K562 (cell line): ENCODE measurements at regions of chr19 and their contacts with region 1.

Region 1: DNA sequence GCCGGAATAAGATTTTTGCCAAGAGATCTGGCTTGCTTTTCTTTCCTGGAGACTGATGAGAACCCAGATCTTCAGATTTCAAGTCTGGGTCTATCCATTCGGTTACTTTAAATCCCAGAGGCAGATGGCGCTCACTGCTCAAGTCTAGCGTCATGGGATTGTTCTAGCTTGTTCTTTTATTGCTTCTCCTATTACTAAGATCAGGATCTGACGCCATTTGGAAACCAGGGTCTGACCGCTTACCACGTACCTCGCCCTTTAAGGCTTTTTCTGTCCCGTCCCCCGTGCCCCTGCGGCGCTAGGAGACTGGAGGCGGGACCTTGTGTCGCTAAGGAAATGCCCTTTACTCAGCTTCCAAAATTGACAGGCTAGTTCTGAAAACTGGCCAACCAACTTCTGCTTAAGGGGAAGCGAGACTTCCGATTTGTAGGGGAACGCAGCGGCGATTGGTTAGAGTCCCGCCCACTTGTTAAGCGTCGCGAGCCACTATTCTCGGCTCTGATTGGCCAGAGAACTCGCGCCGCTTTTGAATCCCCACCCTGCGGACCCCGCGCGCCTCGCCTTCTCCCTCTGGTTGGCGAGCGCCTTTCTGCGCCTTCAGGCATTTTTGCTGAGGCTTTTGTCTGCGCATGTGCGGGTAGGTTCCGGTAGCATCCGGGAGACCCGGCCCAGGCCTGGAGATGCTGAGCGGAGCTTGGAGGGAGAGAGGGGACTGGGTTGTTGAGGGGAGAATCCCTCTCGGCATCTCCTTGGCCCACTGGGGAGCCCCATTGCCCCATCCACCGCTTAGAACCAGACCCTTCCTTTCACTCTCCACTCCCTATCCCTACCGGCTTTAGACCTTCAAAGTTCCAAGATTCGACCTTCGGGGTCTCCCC is 3.8 kb upstream of the C19orf84 start:
- DNase-seq: peak; percentile 93 to 99 (median 95)
- ATAC-seq: peak; percentile 92
- H3K4me3 ChIP-seq: peak overlapping the region; percentile 58
- H3K27ac ChIP-seq: peak overlapping the region; percentile 96
- H3K4me1 ChIP-seq: peaks cover 28 to 30% of the 10 kb centered on the region in 2 experiments; a peak in 4 of 5 replicates
- H3K27me3 ChIP-seq: no peaks in the 10 kb centered on the region
- CTCF ChIP-seq: peak in 2 of 3 experiments; percentile 23 to 36; a peak in 3 of 6 replicates
- EP300 ChIP-seq: peak; percentile 20; the same call in 1 of the 2 replicates
- POLR2A ChIP-seq: peak; percentile 79
- RAD21 ChIP-seq: no peak; a peak in 1 of 4 replicates

Region 2: DNA sequence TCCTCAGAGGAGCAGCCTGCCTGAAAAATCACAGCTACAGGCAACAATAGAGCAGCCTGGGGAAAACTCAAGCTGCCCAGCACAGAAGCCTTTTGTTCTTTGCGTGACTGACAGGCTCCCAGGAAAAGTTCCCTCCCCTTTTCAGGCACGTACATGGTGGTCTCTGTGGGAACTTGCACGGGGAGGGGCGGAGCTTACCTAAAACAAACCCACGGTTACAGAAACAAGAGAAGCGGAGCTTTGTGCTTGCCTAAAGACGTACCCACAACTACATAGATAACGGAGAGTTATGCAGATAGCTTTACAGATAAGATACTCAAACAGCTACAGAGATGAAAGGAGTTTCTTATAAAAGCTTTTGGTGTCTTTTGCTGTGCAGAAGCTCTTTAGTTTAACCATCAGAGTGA is 39.5 kb before region 1 on chr19:
- CTCF ChIA-PET with region 1: no interaction called
- POLR2A ChIA-PET with region 1: interaction called, 8 read pairs
- in situ Hi-C with region 1: no loop called
- intact Hi-C with region 1: loop called (anchors 5 kb)
- DNase-seq: no peak
- ATAC-seq: no peak
- H3K4me3 ChIP-seq: no peak overlapping the region
- H3K27ac ChIP-seq: peak overlapping the region; percentile 32; the same call in 1 of the 3 replicates
- H3K4me1 ChIP-seq: peaks cover 23 to 32% of the 10 kb centered on the region in 2 experiments
- H3K27me3 ChIP-seq: no peaks in the 10 kb centered on the region
- CTCF ChIP-seq: no peak
- EP300 ChIP-seq: no peak
- POLR2A ChIP-seq: no peak
- RAD21 ChIP-seq: no peak

Region 3: DNA sequence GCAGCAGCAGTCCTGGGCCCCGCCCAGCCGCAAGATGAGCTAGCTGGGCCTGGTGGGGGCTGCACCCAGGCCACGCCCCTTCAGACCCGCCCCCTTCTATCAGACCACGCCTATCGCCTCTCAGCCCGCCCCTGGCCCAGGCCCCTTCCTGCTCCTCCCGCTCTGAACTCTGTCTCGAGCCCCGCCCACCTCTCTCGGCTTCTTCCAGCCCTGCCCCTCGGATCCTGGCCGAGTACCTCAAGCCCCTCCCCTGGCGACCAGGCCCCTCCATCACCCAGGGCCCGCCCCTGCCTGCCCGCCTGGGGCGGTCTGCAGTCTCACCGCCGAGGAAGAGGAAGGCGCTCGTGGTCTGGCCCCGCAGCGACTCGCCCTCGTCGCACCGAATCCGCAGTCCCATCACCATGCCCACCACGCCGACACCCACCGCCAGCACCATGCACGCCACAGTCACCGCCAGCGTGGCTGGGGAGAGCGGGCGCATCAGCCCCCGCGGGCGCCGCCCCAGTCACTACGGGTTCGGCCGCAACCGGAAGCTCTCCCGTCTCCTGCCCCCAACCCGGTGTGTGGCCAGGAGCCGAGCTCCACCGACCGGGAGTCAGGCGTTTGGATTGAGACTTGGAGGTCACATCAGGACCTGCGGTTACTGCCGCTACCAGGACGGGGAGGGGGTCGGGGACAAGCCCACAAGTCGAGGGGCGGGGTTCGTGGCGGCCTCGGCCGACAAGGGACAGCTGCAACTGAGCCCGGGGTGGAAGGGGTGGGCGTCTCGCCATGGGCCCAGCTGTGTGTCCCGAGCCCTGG is 26.4 kb before region 1 on chr19:
- CTCF ChIA-PET with region 1: no interaction called
- POLR2A ChIA-PET with region 1: interaction called, 11 read pairs
- in situ Hi-C with region 1: no loop called
- intact Hi-C with region 1: loop called (anchors 1 kb)
- DNase-seq: peak; percentile 96 to 99 (median 97)
- ATAC-seq: peak; percentile 89
- H3K4me3 ChIP-seq: peak overlapping the region; percentile 75
- H3K27ac ChIP-seq: peak overlapping the region; percentile 85
- H3K4me1 ChIP-seq: peaks cover 29 to 57% of the 10 kb centered on the region in 2 experiments
- H3K27me3 ChIP-seq: no peaks in the 10 kb centered on the region
- CTCF ChIP-seq: peak in 1 of 3 experiments; percentile 1; a peak in 1 of 6 replicates
- EP300 ChIP-seq: no peak
- POLR2A ChIP-seq: peak; percentile 85
- RAD21 ChIP-seq: peak in 1 of 2 experiments; percentile 5; a peak in 1 of 4 replicates

Region 4: DNA sequence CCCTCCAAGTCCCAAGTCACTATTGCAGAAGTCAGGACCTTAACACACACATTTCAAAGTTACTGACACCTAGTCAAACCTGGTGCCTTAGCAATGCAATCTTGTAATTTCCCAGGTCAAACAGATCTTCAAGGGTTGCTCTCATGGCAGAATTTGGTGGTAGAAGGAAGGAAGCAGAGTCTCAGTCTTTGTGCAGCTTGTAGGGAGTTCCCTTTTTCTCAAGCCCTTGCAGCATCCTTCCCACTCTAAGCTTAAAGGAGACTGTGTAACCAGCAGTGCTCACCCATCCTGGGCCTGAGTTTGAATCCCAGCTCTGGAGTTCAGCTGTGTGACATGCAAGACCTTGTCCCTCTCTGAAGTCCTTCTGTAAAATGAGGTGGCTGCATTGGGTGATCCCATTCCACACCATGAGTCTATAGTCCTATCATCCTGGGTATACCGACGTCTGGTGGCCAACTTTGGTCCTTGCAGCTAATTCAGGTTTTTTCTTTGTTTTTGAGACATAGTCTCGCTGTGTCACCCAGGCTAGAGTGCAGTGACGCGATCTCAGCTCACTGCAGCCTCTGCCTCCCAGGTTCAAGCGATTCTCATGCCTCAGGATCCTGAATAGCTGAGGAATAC is 13.4 kb after region 1 on chr19:
- CTCF ChIA-PET with region 1: interaction called, 3 read pairs
- POLR2A ChIA-PET with region 1: interaction called, 14 read pairs
- in situ Hi-C with region 1: no loop called
- intact Hi-C with region 1: no loop called
- DNase-seq: peak; percentile 77 to 84 (median 79)
- ATAC-seq: peak; percentile 98
- H3K4me3 ChIP-seq: no peak overlapping the region
- H3K27ac ChIP-seq: no peak overlapping the region
- H3K4me1 ChIP-seq: peaks cover 7 to 13% of the 10 kb centered on the region in 2 experiments; a peak in 4 of 5 replicates
- H3K27me3 ChIP-seq: no peaks in the 10 kb centered on the region
- CTCF ChIP-seq: peak; percentile 88 to 91 (median 89)
- EP300 ChIP-seq: no peak
- POLR2A ChIP-seq: no peak
- RAD21 ChIP-seq: peak; percentile 65 to 91